ENCODE measurements at regions of chr12 and their contacts with region 1.

Region 1: DNA sequence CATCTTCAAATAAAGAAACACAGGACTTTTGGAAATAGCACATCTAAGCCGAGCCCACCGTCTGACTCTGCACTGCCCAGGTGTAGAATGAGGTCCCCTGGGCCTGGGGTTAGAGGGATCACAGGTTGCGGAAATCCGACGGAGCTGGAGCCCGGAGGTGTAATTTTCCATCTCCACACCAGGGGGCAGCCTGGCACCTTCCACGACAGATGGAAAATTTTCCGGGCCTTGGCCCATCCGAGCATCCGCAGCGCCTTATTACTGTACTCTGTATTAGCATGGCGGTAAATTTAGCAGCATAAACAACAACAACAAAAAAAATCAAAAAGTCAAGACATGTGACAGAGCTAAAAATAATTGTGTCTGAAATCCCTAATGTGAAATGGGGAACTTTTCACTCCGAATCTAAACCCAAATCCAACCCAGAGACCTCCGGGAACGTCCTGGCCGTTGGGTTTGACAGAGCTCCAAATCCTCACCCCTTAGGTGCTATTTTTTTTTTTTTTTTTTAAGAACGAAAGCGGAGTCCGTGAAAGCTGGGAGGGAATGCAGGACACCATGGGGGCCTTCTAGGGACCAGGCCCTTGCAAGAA is 93.9 kb downstream of the KSR2 start:
- DNase-seq: peak; percentile 87
- H3K4me3 Mint-ChIP-seq: no peak overlapping the region
- H3K27ac Mint-ChIP-seq: peak overlapping the region; percentile 41
- H3K4me1 Mint-ChIP-seq: peaks cover 8% of the 10 kb centered on the region
- H3K27me3 Mint-ChIP-seq: peaks cover 10% of the 10 kb centered on the region

Region 2: GRCh38 chr12:117803001-117803400 is 71.9 kb before region 1 on chr12:
- intact Hi-C with region 1: no loop called
- DNase-seq: no peak
- H3K4me3 Mint-ChIP-seq: no peak overlapping the region
- H3K27ac Mint-ChIP-seq: no peak overlapping the region
- H3K4me1 Mint-ChIP-seq: no peaks in the 10 kb centered on the region
- H3K27me3 Mint-ChIP-seq: no peaks in the 10 kb centered on the region

Region 3: GRCh38 chr12:118055144-118055557 is 180.2 kb after region 1 on chr12:
- intact Hi-C with region 1: loop called (anchors 2 kb)
- DNase-seq: peak; percentile 91
- H3K4me3 Mint-ChIP-seq: no peak overlapping the region
- H3K27ac Mint-ChIP-seq: peak overlapping the region; percentile 79
- H3K4me1 Mint-ChIP-seq: peaks cover 48% of the 10 kb centered on the region
- H3K27me3 Mint-ChIP-seq: no peaks in the 10 kb centered on the region

Region 4: GRCh38 chr12:118120579-118121363 is 245.8 kb after region 1 on chr12:
- intact Hi-C with region 1: loop called (anchors 5 kb)
- DNase-seq: peak; percentile 87
- H3K4me3 Mint-ChIP-seq: no peak overlapping the region
- H3K27ac Mint-ChIP-seq: peak overlapping the region; percentile 69
- H3K4me1 Mint-ChIP-seq: peaks cover 5% of the 10 kb centered on the region
- H3K27me3 Mint-ChIP-seq: no peaks in the 10 kb centered on the region

Region 5: DNA sequence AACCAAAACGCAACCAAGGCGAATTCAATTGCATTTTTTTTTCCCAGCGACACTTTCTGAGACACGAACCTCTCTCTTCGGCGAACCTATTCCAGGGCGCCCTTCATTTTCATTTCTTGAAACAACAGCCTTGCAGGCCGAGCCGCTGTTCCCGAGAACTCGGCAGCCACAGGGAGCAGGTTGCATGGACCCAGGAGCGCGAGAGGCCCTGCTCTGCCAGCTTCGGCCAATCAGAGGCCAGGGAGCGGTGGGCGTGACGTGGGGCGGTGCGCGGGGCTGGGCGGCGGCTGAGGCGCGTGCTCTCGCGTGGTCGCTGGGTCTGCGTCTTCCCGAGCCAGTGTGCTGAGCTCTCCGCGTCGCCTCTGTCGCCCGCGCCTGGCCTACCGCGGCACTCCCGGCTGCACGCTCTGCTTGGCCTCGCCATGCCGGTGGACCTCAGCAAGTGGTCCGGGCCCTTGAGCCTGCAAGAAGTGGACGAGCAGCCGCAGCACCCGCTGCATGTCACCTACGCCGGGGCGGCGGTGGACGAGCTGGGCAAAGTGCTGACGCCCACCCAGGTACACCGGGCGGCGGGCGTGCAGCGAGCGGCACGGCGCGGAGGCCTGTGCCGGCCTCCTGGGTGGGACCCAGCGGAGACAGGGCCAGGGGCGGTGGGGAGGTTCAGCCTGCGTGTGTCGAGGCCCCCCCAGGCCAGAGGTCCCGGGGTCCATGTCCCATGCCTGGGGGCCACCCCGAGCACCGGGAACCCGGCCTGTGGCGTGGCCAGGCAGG is 261.0 kb after region 1 on chr12 and contains the start of gene PEBP1:
- intact Hi-C with region 1: loop called (anchors 2 kb)
- DNase-seq: peak; percentile 99
- H3K4me3 Mint-ChIP-seq: peak within 1 kb of the TSS; percentile 99
- H3K27ac Mint-ChIP-seq: peak within 1 kb of the TSS; percentile 95
- H3K4me1 Mint-ChIP-seq: peaks cover 24% of the 10 kb centered on the region
- H3K27me3 Mint-ChIP-seq: no peaks in the 10 kb centered on the region
- total RNA-seq, gene PEBP1: 206 and 209 TPM in 2 replicates